H1 (cell line): ENCODE measurements at regions of chr20 and their contacts with region 1.

Region 1: DNA sequence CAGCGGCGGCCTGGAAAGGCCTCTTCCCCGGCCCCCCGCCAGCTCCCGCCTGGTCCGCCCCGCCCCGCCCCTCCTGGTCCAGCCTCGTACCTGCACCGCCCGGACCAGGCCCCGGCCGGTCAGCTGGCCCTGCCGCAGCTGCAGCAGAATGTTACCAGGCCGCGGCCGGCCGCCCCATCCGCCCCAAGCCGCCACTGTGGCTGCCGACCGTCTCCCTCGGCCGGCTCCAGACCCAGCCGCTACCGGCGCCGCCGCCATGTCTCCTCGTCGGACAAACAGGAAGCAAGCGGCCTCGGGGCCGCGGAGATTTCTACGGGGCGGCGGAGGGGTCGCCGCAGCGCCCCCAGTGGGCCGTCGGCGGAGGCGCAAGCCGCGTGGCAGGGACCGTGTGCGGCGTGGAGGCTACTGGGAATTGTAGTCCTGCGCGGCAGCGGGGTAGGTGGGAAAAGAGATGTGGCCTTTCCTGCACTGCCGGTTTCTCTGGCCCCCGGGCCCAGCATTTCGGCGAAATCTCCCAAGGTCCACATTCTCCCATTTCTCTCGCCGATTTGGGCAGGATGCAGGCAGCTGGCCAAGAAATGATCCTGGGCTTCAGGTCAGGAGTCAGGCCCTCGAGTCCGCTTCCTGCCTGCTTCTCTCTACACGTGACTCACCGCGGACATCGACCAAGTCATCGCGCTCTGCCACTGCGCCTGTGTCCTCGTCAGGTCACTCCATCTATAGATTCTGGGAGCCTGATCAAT is at the start of gene TRPC4AP:
- DNase-seq: peak; percentile 75 to 92
- H3K4me3 ChIP-seq: peak within 1 kb of the TSS; percentile 82 to 96 (median 90)
- H3K27ac ChIP-seq: peak within 1 kb of the TSS; percentile 72; the same call in 1 of the 2 replicates
- H3K4me1 ChIP-seq: peaks cover 0 to 10% (median 4%) of the 10 kb centered on the region in 4 experiments; a peak in 5 of 7 replicates
- H3K27me3 ChIP-seq: no peaks in the 10 kb centered on the region
- CTCF ChIP-seq: peak; percentile 88 to 94 (median 89)
- EP300 ChIP-seq: no peak
- POLR2A ChIP-seq: peak in 1 of 2 experiments; percentile 93; a peak in 2 of 3 replicates
- RAD21 ChIP-seq: peak; percentile 23 to 56; a peak in 3 of 4 replicates
- total RNA-seq, gene TRPC4AP: 72.7 and 73.1 TPM in 2 replicates

Region 2: GRCh38 chr20:34861386-34862084 is 231.2 kb before region 1 on chr20:
- CTCF ChIA-PET with region 1: no interaction called
- POLR2A ChIA-PET with region 1: no interaction called
- DNase-seq: no peak
- H3K4me3 ChIP-seq: no peak overlapping the region
- H3K27ac ChIP-seq: no peak overlapping the region
- H3K4me1 ChIP-seq: peaks cover 5 to 15% (median 7%) of the 10 kb centered on the region in 4 experiments; a peak in 6 of 7 replicates
- H3K27me3 ChIP-seq: no peaks in the 10 kb centered on the region; a peak in 1 of 7 replicates
- CTCF ChIP-seq: no peak
- EP300 ChIP-seq: no peak
- POLR2A ChIP-seq: no peak
- RAD21 ChIP-seq: no peak

Region 3: DNA sequence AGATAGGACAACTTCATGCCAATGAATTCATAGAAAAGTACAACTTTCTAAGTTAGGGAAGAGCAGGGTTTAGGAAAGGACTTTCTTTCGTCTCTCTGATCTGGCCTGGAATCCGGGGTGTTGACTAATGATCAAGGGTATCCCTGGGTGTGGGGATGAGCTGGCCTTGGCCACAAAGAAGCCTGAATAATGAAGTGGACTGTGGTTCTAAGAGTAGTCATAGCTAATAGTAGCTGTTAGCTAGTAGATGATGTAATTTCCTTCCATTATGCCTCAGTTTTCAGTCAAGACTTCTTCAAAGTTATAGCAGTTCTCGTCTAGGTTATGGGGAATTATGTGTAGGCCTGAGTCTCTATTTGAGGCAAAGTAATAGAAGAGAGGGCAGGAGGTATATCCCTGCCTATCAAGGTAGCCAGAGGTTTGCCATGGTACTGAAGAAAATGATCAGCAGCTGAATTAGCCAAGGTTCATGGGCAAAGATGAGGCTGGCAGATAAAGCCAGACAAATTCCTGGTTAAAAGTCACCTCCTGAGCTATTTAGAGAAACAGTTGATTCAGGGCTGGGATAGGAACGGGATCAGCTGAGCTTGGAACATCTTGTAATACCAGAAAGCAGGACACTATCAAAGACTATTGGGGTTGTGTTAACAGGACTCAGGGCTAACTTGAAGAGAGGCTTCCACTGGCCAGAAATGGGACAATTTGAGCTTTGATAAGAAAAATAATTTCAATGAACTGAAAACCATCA is 18.6 kb after region 1 on chr20:
- CTCF ChIA-PET with region 1: interaction called, 11 read pairs
- POLR2A ChIA-PET with region 1: no interaction called
- DNase-seq: no peak
- H3K4me3 ChIP-seq: no peak overlapping the region
- H3K27ac ChIP-seq: no peak overlapping the region
- H3K4me1 ChIP-seq: no peaks in the 10 kb centered on the region
- H3K27me3 ChIP-seq: no peaks in the 10 kb centered on the region
- CTCF ChIP-seq: no peak
- EP300 ChIP-seq: no peak
- POLR2A ChIP-seq: no peak
- RAD21 ChIP-seq: no peak

Region 4: GRCh38 chr20:35120012-35120701 is 27.5 kb after region 1 on chr20:
- CTCF ChIA-PET with region 1: interaction called, 17 read pairs
- POLR2A ChIA-PET with region 1: no interaction called
- DNase-seq: no peak
- H3K4me3 ChIP-seq: no peak overlapping the region
- H3K27ac ChIP-seq: no peak overlapping the region
- H3K4me1 ChIP-seq: no peaks in the 10 kb centered on the region
- H3K27me3 ChIP-seq: no peaks in the 10 kb centered on the region
- CTCF ChIP-seq: no peak
- EP300 ChIP-seq: no peak
- POLR2A ChIP-seq: no peak
- RAD21 ChIP-seq: no peak

Region 5: GRCh38 chr20:35134472-35134871 is 41.8 kb after region 1 on chr20:
- CTCF ChIA-PET with region 1: no interaction called
- POLR2A ChIA-PET with region 1: no interaction called
- DNase-seq: no peak
- H3K4me3 ChIP-seq: no peak overlapping the region
- H3K27ac ChIP-seq: no peak overlapping the region
- H3K4me1 ChIP-seq: no peaks in the 10 kb centered on the region
- H3K27me3 ChIP-seq: no peaks in the 10 kb centered on the region
- CTCF ChIP-seq: no peak
- EP300 ChIP-seq: no peak
- POLR2A ChIP-seq: no peak
- RAD21 ChIP-seq: no peak

Region 6: DNA sequence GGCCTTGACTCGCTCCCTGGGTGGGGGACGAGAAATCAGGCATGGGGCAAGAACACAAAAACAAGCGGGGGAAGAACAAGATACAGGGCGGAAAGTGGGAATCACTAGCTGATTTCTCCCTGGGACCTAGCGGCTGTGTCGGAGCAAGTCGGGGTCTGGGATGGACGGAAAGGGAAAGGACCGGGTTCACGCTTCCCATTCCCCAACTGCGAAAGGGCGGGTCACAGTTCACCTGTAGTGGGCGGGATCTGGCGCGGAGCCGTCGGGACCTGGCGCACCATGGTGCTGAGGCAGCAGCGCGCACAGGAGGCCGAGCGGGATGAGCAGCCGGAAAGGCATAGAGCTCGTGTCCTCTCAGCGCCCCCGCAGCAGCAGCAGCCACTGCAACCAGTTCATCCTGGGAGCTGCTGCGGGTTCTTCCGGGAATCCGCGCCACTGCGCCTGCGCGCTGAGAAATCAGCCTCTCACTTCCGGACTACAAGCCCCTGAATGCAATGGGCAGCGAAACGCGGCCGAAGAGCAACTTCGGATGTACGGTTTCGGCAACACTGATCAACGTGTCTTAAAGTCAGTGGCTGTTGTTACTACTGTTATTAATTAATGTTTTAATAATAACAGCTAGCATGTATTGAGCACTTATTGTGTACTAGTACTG is 54.4 kb after region 1 on chr20 and contains the start of gene EDEM2:
- CTCF ChIA-PET with region 1: interaction called, 18 read pairs
- POLR2A ChIA-PET with region 1: no interaction called
- DNase-seq: peak; percentile 96 to 97
- H3K4me3 ChIP-seq: peak within 1 kb of the TSS; percentile 86 to 94 (median 90)
- H3K27ac ChIP-seq: peak within 1 kb of the TSS; percentile 68; the same call in 1 of the 2 replicates
- H3K4me1 ChIP-seq: 0 out of 7 replicates have a peak, but pooled peaks cover 0 to 3% (median 0%) of the 10 kb centered on the region in 4 experiments
- H3K27me3 ChIP-seq: no peaks in the 10 kb centered on the region
- CTCF ChIP-seq: 0 out of 4 replicates have a peak, but pooled peaks of 1 of the 3 experiments have one; percentile 4
- EP300 ChIP-seq: no peak
- POLR2A ChIP-seq: peak in 1 of 2 experiments; percentile 57; a peak in 2 of 3 replicates
- RAD21 ChIP-seq: peak in 1 of 2 experiments; percentile 29; a peak in 2 of 4 replicates
- total RNA-seq, gene EDEM2: 19.6 and 21.5 TPM in 2 replicates

Region 7: GRCh38 chr20:35226775-35227681 is 134.3 kb after region 1 on chr20:
- CTCF ChIA-PET with region 1: interaction called, 12 read pairs
- POLR2A ChIA-PET with region 1: no interaction called
- DNase-seq: peak in 1 of 2 experiments; percentile 89
- H3K4me3 ChIP-seq: peak overlapping the region; percentile 44 to 59 (median 52)
- H3K27ac ChIP-seq: no peak overlapping the region
- H3K4me1 ChIP-seq: peaks cover 0 to 14% (median 6%) of the 10 kb centered on the region in 4 experiments; a peak in 5 of 7 replicates
- H3K27me3 ChIP-seq: peaks cover 0 to 13% (median 2%) of the 10 kb centered on the region in 4 experiments; a peak in 2 of 7 replicates
- CTCF ChIP-seq: no peak
- EP300 ChIP-seq: no peak
- POLR2A ChIP-seq: no peak
- RAD21 ChIP-seq: peak in 1 of 2 experiments; percentile 0; a peak in 1 of 4 replicates